PC-3 (cell line): ENCODE measurements at regions of chr7 and their contacts with region 1.

Region 1: DNA sequence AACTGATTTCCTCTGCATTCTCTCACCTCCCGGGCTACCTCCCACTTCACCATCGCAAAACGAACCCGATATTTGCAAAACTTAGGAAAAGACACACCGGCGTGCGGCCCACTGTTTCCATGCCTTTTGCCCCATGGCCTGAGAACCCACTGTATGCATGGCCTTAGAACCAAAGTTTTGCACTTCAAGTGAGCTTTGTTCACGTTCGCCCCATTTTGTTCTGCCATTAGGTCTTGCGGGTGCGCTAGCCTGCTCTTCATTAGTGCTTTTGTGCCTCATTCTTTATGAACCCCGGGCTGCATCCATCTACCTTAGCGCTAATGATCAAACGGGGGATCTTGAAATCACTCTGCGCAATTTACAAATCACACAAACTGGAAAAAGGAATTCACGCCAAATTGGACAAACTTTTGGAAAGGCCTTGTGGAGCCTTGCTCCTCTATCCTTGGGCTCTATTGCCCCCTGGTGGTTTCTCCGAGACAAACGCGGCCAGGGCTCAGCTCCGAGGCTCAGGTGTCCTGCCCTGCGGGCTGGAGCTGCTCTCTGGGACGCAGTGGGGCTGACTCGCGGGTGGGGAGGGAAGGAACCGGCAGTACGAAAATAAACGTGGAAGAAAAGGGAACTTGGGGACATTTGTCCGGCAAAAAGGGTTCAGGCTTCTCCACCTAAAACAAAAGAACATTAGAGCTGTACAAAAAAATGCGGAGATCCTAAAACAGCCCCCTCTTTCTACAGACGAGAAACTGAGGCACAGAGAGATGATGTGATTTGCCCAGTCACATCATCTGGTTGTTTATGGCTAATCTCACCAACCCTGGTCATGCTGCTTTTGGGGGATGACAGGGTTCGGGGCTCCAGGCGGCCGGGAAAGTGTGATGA is 300.4 kb upstream of the NFE2L3 start:
- DNase-seq: peak; percentile 89
- ATAC-seq: peak; percentile 77
- H3K4me3 ChIP-seq: peak overlapping the region; percentile 53
- H3K27ac ChIP-seq: no peak overlapping the region
- H3K4me1 ChIP-seq: peaks cover 35% of the 10 kb centered on the region
- H3K27me3 ChIP-seq: peaks cover 68% of the 10 kb centered on the region
- CTCF ChIP-seq: peak; percentile 88

Region 2: DNA sequence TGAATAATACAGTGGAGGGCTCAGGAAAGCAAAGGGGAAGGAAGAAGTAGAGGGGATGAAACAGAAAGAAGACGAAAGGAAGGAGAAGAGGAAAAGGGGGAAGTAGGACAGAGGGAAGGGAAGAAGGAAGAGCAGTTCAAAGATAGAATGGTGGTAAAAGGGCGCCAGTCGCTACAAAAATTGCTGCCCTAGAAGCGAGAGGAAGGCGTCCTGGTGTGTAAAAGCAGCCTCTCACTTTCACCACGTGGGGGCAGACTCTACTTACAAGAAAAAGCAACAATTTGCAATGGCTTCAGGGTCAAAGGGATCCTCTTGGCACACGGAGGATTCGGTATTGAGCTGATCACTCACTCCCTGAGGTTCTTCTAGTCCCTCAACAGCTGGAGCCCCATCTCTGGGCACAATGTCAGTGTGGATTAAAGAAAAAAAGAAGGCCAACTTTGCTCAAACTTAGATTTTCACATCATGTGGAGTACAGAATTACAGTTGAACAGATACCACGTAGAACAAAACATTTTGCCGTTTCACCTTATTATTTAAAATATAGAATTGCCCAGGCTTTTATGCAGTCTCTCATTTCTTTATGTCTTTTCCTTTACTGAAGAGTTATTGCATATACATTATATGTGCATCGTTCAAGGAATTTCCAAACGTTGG is 591.9 kb before region 1 on chr7:
- CTCF ChIA-PET with region 1: interaction called, 4 read pairs
- POLR2A ChIA-PET with region 1: no interaction called
- intact Hi-C with region 1: loop called (anchors 1 kb)
- DNase-seq: peak; percentile 66
- ATAC-seq: peak; percentile 78
- H3K4me3 ChIP-seq: no peak overlapping the region
- H3K27ac ChIP-seq: no peak overlapping the region
- H3K4me1 ChIP-seq: no peaks in the 10 kb centered on the region
- H3K27me3 ChIP-seq: peaks cover 54% of the 10 kb centered on the region
- CTCF ChIP-seq: peak; percentile 77

Region 3: GRCh38 chr7:25389489-25390106 is 462.0 kb before region 1 on chr7:
- CTCF ChIA-PET with region 1: no interaction called
- POLR2A ChIA-PET with region 1: no interaction called
- intact Hi-C with region 1: loop called (anchors 2 kb)
- DNase-seq: peak; percentile 41
- ATAC-seq: peak; percentile 53
- H3K4me3 ChIP-seq: no peak overlapping the region
- H3K27ac ChIP-seq: no peak overlapping the region
- H3K4me1 ChIP-seq: no peaks in the 10 kb centered on the region
- H3K27me3 ChIP-seq: peaks cover 68% of the 10 kb centered on the region
- CTCF ChIP-seq: peak; percentile 59; the same call in 1 of the 2 replicates

Region 4: GRCh38 chr7:25460433-25460832 is 391.1 kb before region 1 on chr7:
- CTCF ChIA-PET with region 1: no interaction called
- POLR2A ChIA-PET with region 1: no interaction called
- intact Hi-C with region 1: no loop called
- DNase-seq: no peak
- ATAC-seq: no peak
- H3K4me3 ChIP-seq: no peak overlapping the region
- H3K27ac ChIP-seq: no peak overlapping the region
- H3K4me1 ChIP-seq: no peaks in the 10 kb centered on the region
- H3K27me3 ChIP-seq: peaks cover 30% of the 10 kb centered on the region; the same call in 1 of the 2 replicates
- CTCF ChIP-seq: no peak

Region 5: GRCh38 chr7:25726170-25726780 is 125.3 kb before region 1 on chr7:
- CTCF ChIA-PET with region 1: no interaction called
- POLR2A ChIA-PET with region 1: no interaction called
- intact Hi-C with region 1: no loop called
- DNase-seq: no peak
- ATAC-seq: no peak
- H3K4me3 ChIP-seq: no peak overlapping the region
- H3K27ac ChIP-seq: no peak overlapping the region
- H3K4me1 ChIP-seq: no peaks in the 10 kb centered on the region
- H3K27me3 ChIP-seq: peaks cover 58% of the 10 kb centered on the region
- CTCF ChIP-seq: no peak

Region 6: GRCh38 chr7:25940086-25940906 is 88.7 kb after region 1 on chr7:
- CTCF ChIA-PET with region 1: no interaction called
- POLR2A ChIA-PET with region 1: no interaction called
- intact Hi-C with region 1: no loop called
- DNase-seq: no peak
- ATAC-seq: no peak
- H3K4me3 ChIP-seq: peak overlapping the region; percentile 33; the same call in 1 of the 2 replicates
- H3K27ac ChIP-seq: no peak overlapping the region
- H3K4me1 ChIP-seq: no peaks in the 10 kb centered on the region
- H3K27me3 ChIP-seq: no peaks in the 10 kb centered on the region
- CTCF ChIP-seq: no peak